ENCODE measurements at regions of chr3 and their contacts with region 1.

Region 1: GRCh38 chr3:196711838-196712513 is at the starts of genes CEP19 and PIGX:
- DNase-seq: peak; percentile 82 to 98 (median 93)
- ATAC-seq: peak; percentile 82 to 90 (median 87)
- H3K4me3 ChIP-seq: peak within 1 kb of the TSS; percentile 70 to 91
- H3K4me3 Mint-ChIP-seq: peak within 1 kb of the TSS; percentile 92 to 97 (median 95)
- H3K27ac ChIP-seq: peak within 1 kb of the TSS; percentile 99
- H3K27ac Mint-ChIP-seq: peak within 1 kb of the TSS; percentile 98 to 99
- H3K4me1 ChIP-seq: peaks cover 6 to 25% of the 10 kb centered on the region in 2 experiments
- H3K4me1 Mint-ChIP-seq: peaks cover 28 to 41% (median 35%) of the 10 kb centered on the region in 3 donors
- H3K27me3 ChIP-seq: no peaks in the 10 kb centered on the region
- H3K27me3 Mint-ChIP-seq: no peaks in the 10 kb centered on the region
- total RNA-seq, gene CEP19: 1.6 to 8.5 (median 6.4) TPM
- total RNA-seq, gene PIGX: 18.9 to 27.9 (median 22.3) TPM

Region 2: GRCh38 chr3:196650740-196651311 is 61.1 kb before region 1 on chr3:
- CTCF ChIA-PET with region 1: interaction called in 1 of 2 experiments, 10 read pairs
- POLR2A ChIA-PET with region 1: no interaction called
- DNase-seq: no peak
- ATAC-seq: peak in 2 of 4 experiments; percentile 53 to 64
- H3K4me3 ChIP-seq: no peak overlapping the region
- H3K4me3 Mint-ChIP-seq: no peak overlapping the region
- H3K27ac ChIP-seq: no peak overlapping the region
- H3K27ac Mint-ChIP-seq: peak overlapping the region; percentile 78 to 86
- H3K4me1 ChIP-seq: peaks cover 2 to 37% of the 10 kb centered on the region in 2 experiments
- H3K4me1 Mint-ChIP-seq: peaks cover 30 to 54% (median 52%) of the 10 kb centered on the region in 3 donors
- H3K27me3 ChIP-seq: no peaks in the 10 kb centered on the region
- H3K27me3 Mint-ChIP-seq: no peaks in the 10 kb centered on the region

Region 3: GRCh38 chr3:196659901-196660351 is 52.0 kb before region 1 on chr3:
- CTCF ChIA-PET with region 1: interaction called, 5 to 10 read pairs
- POLR2A ChIA-PET with region 1: no interaction called
- DNase-seq: no peak
- ATAC-seq: no peak
- H3K4me3 ChIP-seq: no peak overlapping the region
- H3K4me3 Mint-ChIP-seq: no peak overlapping the region
- H3K27ac ChIP-seq: no peak overlapping the region
- H3K27ac Mint-ChIP-seq: no peak overlapping the region
- H3K4me1 ChIP-seq: no peaks in the 10 kb centered on the region
- H3K4me1 Mint-ChIP-seq: no peaks in the 10 kb centered on the region
- H3K27me3 ChIP-seq: no peaks in the 10 kb centered on the region
- H3K27me3 Mint-ChIP-seq: no peaks in the 10 kb centered on the region

Region 4: DNA sequence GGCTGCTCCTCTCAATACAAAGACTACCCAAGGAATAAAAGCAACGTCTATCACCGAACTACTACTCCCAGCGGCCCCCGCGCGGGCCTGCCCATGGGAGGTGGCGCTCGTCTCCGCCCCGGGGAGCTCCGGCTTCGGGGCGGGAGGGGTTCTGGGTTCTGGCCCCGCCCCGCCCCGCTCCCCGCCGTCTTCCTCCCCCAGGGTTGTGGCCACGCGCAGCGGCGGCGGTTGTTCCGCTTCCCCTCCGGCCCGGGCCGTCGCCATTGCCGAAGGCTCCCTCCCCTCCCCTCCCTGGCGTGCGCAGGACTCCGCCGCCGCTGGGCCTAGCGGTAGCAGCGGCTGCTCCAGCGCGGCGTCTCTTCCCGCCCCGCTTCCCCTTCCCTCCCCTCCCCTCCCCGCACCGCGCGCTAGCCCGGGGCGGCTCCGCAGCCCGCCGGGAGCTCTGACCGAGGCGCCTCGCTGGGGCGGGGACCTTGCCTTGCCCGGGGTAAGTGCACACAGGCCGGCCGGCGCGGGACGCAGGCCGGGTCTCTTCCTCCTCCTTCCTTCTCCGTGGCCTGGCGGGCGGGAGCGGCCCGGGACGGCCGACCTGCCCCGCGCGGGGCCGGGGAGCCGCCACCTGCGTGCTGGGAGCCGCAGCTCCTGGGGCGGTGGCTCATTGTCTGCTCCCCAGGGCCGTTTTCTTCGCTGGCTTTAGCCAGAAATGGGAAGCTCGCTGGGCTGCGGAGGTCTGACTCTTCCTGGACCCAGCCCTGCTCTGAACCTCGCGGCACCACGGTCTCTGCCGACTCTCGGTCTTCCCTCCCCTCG is 27.9 kb after region 1 on chr3 and contains the start of gene PAK2:
- CTCF ChIA-PET with region 1: interaction called in 1 of 2 experiments, 5 read pairs
- POLR2A ChIA-PET with region 1: interaction called, 3 to 18 read pairs
- DNase-seq: peak; percentile 79 to 93 (median 88)
- ATAC-seq: peak; percentile 88 to 94 (median 89)
- H3K4me3 ChIP-seq: peak within 1 kb of the TSS; percentile 86 to 91
- H3K4me3 Mint-ChIP-seq: peak within 1 kb of the TSS; percentile 99 to 100 (median 99)
- H3K27ac ChIP-seq: peak within 1 kb of the TSS; percentile 83
- H3K27ac Mint-ChIP-seq: peak within 1 kb of the TSS; percentile 97 to 98
- H3K4me1 ChIP-seq: peaks cover 15 to 23% of the 10 kb centered on the region in 2 experiments
- H3K4me1 Mint-ChIP-seq: peaks cover 29 to 38% (median 37%) of the 10 kb centered on the region in 3 donors
- H3K27me3 ChIP-seq: no peaks in the 10 kb centered on the region
- H3K27me3 Mint-ChIP-seq: no peaks in the 10 kb centered on the region
- total RNA-seq, gene PAK2: 62.7 to 87.3 (median 76.2) TPM

Measured in T-cell (primary cell).